ENCODE measurements at regions of chr7 and their contacts with region 1.

Region 1: GRCh38 chr7:44573464-44574286 is at the start of gene DDX56:
- DNase-seq: peak; percentile 97
- ATAC-seq: peak; percentile 98
- H3K4me3 Mint-ChIP-seq: peak within 1 kb of the TSS; percentile 90
- H3K27ac Mint-ChIP-seq: peak within 1 kb of the TSS; percentile 94
- H3K4me1 Mint-ChIP-seq: peaks cover 41% of the 10 kb centered on the region
- H3K27me3 Mint-ChIP-seq: no peaks in the 10 kb centered on the region
- total RNA-seq, gene DDX56: 98.5 to 104 TPM

Region 2: GRCh38 chr7:44257618-44258422 is 315.9 kb before region 1 on chr7:
- CTCF ChIA-PET with region 1: no interaction called
- POLR2A ChIA-PET with region 1: interaction called, 13 read pairs
- intact Hi-C with region 1: no loop called
- DNase-seq: peak; percentile 90
- ATAC-seq: peak; percentile 91
- H3K4me3 Mint-ChIP-seq: peak overlapping the region; percentile 30
- H3K27ac Mint-ChIP-seq: peak overlapping the region; percentile 90
- H3K4me1 Mint-ChIP-seq: peaks cover 46% of the 10 kb centered on the region
- H3K27me3 Mint-ChIP-seq: no peaks in the 10 kb centered on the region

Measured in activated CD4-positive, alpha-beta T cell treated with anti-CD3 and anti-CD28 coated beads for 36 hours (primary cell).